Astrocyte of the cerebellum (primary cell): ENCODE measurements at regions of chr3 and their contacts with region 1.

Region 1: DNA sequence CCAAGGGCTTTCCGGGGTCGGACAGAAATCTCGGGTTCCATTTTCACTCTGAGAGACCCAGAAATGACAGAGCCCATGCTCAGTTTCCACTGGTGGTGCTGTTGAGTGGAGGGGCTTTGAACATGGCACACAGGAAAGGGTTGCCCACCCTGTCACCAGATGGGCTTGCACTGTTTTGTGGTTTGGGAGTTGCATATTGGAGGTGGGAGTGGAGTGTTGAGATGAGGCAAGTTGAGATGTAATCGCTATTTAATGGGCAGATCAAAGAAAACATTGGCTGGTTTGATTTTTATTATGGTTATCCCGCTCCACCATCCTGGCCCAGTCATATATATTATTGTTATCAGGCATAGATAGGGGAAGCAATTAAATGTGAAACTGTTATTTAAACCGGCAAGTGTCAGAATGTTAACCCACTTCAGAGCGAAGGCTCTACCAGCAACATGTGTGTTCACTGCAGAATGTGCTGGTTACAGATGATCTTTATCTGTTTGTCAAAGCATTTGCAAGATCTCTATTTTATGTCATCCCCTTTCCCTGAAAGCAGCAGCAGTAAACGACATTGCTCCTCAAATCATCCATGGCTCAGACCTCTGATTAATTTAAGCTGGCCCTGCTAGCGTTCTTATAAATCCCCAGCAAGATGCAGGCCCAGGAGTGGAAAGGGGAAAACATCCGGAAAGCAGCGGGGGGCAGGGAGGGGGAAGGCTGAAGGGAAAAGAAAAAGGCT is 58.3 kb upstream of the TSEN2 start:
- DNase-seq: no peak
- H3K4me3 ChIP-seq: no peak overlapping the region
- CTCF ChIP-seq: no peak

Region 2: DNA sequence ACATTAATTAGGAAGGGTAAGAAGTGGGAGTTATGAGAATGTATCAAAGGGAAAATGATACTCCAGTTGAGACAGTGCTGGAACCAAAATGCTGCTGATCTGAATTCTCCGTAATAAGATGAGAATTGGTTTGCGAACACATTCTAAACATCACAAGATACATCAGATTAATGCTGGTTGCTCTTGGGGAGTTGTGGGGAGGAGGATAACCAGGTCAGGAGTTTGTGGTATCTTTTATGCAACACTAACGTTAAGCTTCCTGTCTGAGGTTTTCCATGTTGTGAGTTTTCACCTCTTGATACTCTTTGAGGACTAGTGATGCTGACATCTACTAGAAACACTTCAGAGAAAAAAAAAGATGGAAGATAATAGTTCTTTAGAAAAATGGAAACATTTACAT is 89.9 kb before region 1 on chr3:
- in situ Hi-C with region 1: loop called (anchors 5 kb)
- DNase-seq: no peak
- H3K4me3 ChIP-seq: no peak overlapping the region
- CTCF ChIP-seq: no peak

Region 3: GRCh38 chr3:12532182-12532581 is 106.2 kb after region 1 on chr3:
- in situ Hi-C with region 1: no loop called
- DNase-seq: no peak
- H3K4me3 ChIP-seq: no peak overlapping the region
- CTCF ChIP-seq: no peak

Region 4: GRCh38 chr3:12840591-12841148 is 414.7 kb after region 1 on chr3:
- in situ Hi-C with region 1: no loop called
- DNase-seq: no peak
- H3K4me3 ChIP-seq: peak overlapping the region; percentile 100
- CTCF ChIP-seq: no peak